Heart left ventricle (tissue), 16 donors: ENCODE measurements at regions of chr10 and their contacts with region 1.

Region 1: GRCh38 chr10:93482145-93482834 is at the start of gene MYOF:
- DNase-seq: peak; percentile 57 to 72 (median 61)
- ATAC-seq: peak; percentile 78 to 91 (median 87)
- H3K4me3 ChIP-seq: peak within 1 kb of the TSS; percentile 21 to 72 (median 58)
- H3K27ac ChIP-seq: peak within 1 kb of the TSS; percentile 35 to 90 (median 79)
- H3K4me1 ChIP-seq: peaks cover 0 to 31% (median 7%) of the 10 kb centered on the region in 12 donors
- H3K27me3 ChIP-seq: no peaks in the 10 kb centered on the region
- CTCF ChIP-seq: peak in 11 of 12 donors; percentile 41 to 75 (median 63)
- POLR2A ChIP-seq: peak in 1 of 2 donors; percentile 39
- total RNA-seq, gene MYOF: 16.0 to 64.5 (median 37.2) TPM

Region 2: GRCh38 chr10:93280699-93281366 is 201.5 kb before region 1 on chr10:
- intact Hi-C with region 1: no loop called
- DNase-seq: no peak
- ATAC-seq: no peak
- H3K4me3 ChIP-seq: no peak overlapping the region
- H3K27ac ChIP-seq: no peak overlapping the region
- H3K4me1 ChIP-seq: peaks cover 0 to 6% (median 0%) of the 10 kb centered on the region in 12 donors
- H3K27me3 ChIP-seq: no peaks in the 10 kb centered on the region
- CTCF ChIP-seq: no peak
- POLR2A ChIP-seq: no peak

Region 3: DNA sequence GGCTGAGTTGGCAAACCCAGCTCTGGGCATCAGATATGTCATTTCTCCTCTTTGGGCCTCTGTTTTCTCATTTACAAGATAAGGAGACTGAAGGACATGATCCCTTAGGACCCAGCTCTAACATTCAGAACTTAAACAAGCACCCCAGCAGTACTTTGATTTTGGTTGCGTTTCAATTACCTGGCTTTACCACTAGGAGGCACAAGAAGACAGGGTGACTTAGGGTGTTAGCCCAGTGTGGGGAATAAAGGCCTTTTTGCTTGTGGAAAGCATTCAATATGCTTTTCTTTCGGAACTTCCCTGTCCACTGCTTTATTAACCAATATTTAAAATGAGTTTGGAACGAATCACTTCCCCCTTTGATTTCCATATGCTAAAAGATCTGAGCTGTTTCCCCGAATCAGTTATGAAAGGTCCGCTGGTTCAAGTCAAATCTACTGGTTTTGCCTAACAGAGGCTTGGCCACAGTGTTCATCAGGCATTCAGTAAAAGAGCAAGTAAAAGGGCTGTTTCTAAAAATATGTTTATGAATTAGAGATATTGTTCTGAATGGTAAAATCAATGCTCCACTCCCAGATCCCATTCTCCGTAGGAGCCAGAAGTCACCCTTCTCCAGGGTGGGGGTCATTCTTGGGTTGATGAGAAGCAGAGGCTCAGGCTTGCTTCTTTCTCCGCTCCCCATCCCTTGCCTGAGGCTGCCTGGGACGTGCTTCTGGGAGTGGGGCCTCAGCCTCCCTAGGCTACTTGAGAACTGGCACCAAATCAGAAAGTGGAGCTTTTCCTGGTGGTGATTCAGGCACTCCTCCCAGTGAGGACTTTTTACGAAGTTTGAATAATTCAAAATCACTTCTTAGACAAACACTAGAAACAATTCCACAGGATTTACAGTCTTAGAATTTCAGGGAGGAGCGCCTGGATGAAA is 105.7 kb before region 1 on chr10:
- intact Hi-C with region 1: loop called (anchors 1 to 2 kb)
- DNase-seq: peak in 4 of 5 donors; percentile 37 to 64 (median 45)
- ATAC-seq: peak; percentile 78 to 93 (median 88)
- H3K4me3 ChIP-seq: peak overlapping the region in 3 of 12 donors; percentile 3 to 24 (median 10)
- H3K27ac ChIP-seq: peak overlapping the region in 10 of 12 donors; percentile 43 to 83 (median 72)
- H3K4me1 ChIP-seq: peaks cover 0 to 36% (median 11%) of the 10 kb centered on the region in 12 donors
- H3K27me3 ChIP-seq: no peaks in the 10 kb centered on the region
- CTCF ChIP-seq: peak; percentile 86 to 97 (median 94)
- POLR2A ChIP-seq: no peak

Region 4: DNA sequence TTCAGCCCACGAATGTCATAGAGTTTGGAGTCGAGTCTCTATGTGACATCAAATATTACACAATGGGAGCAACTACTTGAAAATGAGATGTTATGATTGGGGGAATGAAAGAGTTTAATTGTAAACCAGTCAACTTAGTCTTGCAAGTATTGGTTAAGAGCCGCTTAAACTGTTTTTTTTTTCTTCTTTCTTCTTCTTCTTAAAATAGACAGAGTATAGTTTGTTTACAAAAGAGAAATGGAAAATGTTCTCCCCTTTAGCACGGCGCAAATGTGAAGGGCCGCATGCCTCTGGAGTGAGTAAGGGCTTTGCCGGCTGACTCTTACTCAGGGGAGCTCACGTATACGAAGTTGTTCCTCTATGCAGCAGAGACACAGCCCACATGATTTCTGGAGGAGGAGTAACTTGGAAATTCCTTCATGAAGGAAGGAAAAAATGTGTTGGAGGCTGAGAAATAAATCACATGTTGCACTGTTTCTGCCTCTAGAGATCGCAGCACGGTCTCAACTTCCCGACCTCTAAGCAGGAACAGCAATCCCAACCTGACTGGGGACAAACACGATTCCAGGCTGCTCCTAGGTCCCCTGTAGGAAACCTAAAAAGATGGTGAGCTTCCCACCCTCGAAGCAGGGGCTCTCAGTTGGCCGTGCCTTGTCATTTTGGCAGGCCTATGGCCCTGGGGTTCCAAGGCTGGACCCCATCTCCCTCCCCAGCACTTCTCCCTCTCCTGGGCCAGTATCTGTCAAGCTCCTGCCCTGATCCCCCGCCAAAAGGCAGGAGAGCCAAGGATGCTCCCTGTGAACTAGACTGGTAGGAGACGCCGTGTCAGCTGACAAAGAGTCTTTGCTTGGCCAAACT is 45.0 kb before region 1 on chr10:
- intact Hi-C with region 1: loop called in 6 of 10 experiments (anchors 5 kb)
- DNase-seq: peak in 4 of 5 donors; percentile 83 to 87 (median 85)
- ATAC-seq: peak; percentile 95 to 96 (median 96)
- H3K4me3 ChIP-seq: peak overlapping the region in 8 of 12 donors; percentile 3 to 36 (median 30)
- H3K27ac ChIP-seq: peak overlapping the region; percentile 82 to 99 (median 98)
- H3K4me1 ChIP-seq: peaks cover 0 to 85% (median 48%) of the 10 kb centered on the region in 12 donors
- H3K27me3 ChIP-seq: no peaks in the 10 kb centered on the region
- CTCF ChIP-seq: no peak
- POLR2A ChIP-seq: no peak

Region 5: DNA sequence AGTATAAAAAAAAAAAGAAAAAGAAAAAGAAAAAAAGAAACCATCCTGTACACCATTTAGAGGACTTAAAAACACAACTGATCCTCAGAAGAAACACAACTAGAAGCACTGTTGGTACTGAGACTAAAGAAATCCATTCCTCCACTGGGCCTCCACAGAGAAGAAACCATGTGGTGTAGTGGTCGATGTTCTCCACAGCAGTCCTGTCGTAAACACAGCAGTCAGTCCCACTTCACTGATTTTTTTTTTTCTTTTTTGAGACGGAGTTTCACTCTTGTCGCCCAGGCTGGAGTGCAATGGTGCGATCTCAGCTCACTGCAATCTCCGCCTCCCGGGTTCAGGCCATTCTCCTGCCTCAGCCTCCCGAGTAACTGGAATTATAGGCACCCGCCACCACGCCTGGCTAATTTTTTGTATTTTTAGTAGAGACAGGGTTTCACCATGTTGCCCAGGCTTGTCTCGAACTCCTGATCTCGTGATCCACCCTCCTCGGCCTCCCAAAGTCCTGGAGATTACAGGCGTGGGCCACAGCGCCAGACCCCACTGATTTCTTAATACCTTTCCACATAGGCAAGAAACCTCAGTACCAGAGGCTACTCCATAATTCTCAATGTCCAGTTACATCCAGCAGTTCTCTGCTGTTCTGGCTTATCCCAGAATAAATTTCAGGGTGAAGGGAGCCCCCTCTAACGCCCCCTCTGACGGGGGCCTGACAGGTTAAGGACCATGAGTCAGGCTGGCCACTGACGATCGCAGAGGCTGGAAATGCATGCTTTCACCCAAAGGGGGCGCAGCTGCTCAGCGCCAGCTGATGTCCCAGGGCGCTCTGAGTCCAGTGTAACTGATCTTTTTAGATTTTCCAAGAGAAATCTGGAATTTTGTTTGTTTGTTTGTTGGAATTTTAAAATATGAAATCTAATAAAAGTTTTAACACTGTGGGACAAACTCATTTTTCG is 59.4 kb after region 1 on chr10:
- intact Hi-C with region 1: no loop called
- DNase-seq: peak in 4 of 5 donors; percentile 37 to 70 (median 42)
- ATAC-seq: peak; percentile 81 to 90 (median 86)
- H3K4me3 ChIP-seq: peak overlapping the region in 10 of 12 donors; percentile 0 to 47 (median 32)
- H3K27ac ChIP-seq: peak overlapping the region in 4 of 12 donors; percentile 7 to 51 (median 40)
- H3K4me1 ChIP-seq: peaks cover 0 to 15% (median 8%) of the 10 kb centered on the region in 12 donors
- H3K27me3 ChIP-seq: no peaks in the 10 kb centered on the region
- CTCF ChIP-seq: peak; percentile 71 to 91 (median 83)
- POLR2A ChIP-seq: no peak

Region 6: GRCh38 chr10:93573051-93573909 is 91.0 kb after region 1 on chr10:
- intact Hi-C with region 1: no loop called
- DNase-seq: peak in 4 of 5 donors; percentile 21 to 74 (median 48)
- ATAC-seq: peak in 3 of 4 donors; percentile 54 to 81 (median 67)
- H3K4me3 ChIP-seq: no peak overlapping the region
- H3K27ac ChIP-seq: no peak overlapping the region
- H3K4me1 ChIP-seq: peaks cover 0 to 26% (median 0%) of the 10 kb centered on the region in 12 donors
- H3K27me3 ChIP-seq: peaks cover 0 to 29% (median 10%) of the 10 kb centered on the region in 9 donors
- CTCF ChIP-seq: no peak
- POLR2A ChIP-seq: no peak

Region 7: DNA sequence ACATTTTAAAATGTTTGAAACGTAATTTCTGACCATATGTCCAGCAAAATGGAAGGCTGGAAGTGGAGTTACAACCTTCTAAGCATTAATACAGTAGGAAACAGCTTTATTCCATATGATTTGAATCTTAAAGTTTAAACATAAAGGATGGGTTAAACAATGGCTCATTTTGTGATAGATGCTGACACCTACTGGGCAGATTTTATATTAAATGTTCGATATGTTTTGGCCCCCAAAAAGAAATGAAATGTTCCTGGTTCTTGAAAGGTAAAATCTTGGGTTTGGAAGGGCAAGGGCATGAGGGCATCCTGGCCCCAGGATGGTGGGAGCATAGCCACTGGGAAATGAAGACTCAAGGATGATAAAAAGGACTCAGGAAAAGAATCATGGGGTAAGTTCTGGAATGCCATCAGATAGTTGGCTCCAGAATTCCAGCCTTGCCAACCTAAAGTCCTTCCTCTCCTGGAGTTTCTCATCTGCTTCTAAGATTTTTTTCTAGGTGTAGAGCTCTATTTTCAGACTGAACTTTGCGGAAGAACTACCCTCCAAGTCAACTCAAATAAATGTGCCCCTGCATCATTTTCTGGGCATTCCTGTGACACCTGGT is 376.9 kb after region 1 on chr10:
- intact Hi-C with region 1: no loop called
- DNase-seq: no peak
- ATAC-seq: no peak
- H3K4me3 ChIP-seq: no peak overlapping the region
- H3K27ac ChIP-seq: no peak overlapping the region
- H3K4me1 ChIP-seq: no peaks in the 10 kb centered on the region
- H3K27me3 ChIP-seq: peaks cover 0 to 3% (median 0%) of the 10 kb centered on the region in 9 donors
- CTCF ChIP-seq: peak in 8 of 12 donors; percentile 13 to 40 (median 24)
- POLR2A ChIP-seq: no peak